Heart right ventricle (tissue), 16 donors: ENCODE measurements at regions of chr11 and their contacts with region 1.

Region 1: GRCh38 chr11:43944761-43945311 is 2.4 kb downstream of the C11orf96 start:
- DNase-seq: peak; percentile 81 to 85
- ATAC-seq: peak; percentile 18 to 71 (median 52)
- H3K4me3 ChIP-seq: peak overlapping the region; percentile 38 to 87 (median 80)
- H3K27ac ChIP-seq: peak overlapping the region; percentile 86 to 93 (median 92)
- H3K4me1 ChIP-seq: peaks cover 5 to 58% (median 32%) of the 10 kb centered on the region in 9 donors
- H3K27me3 ChIP-seq: peaks cover 0 to 49% (median 0%) of the 10 kb centered on the region in 7 donors
- CTCF ChIP-seq: peak; percentile 74 to 90 (median 84)

Region 2: GRCh38 chr11:43542750-43543712 is 401.8 kb before region 1 on chr11:
- intact Hi-C with region 1: no loop called
- DNase-seq: no peak
- ATAC-seq: no peak
- H3K4me3 ChIP-seq: no peak overlapping the region
- H3K27ac ChIP-seq: no peak overlapping the region
- H3K4me1 ChIP-seq: peaks cover 0 to 9% (median 3%) of the 10 kb centered on the region in 9 donors
- H3K27me3 ChIP-seq: peaks cover 0 to 57% (median 42%) of the 10 kb centered on the region in 7 donors
- CTCF ChIP-seq: no peak

Region 3: GRCh38 chr11:43895601-43896000 is 49.2 kb before region 1 on chr11:
- intact Hi-C with region 1: loop called in 4 of 10 experiments (anchors 5 kb)
- DNase-seq: no peak
- ATAC-seq: no peak
- H3K4me3 ChIP-seq: no peak overlapping the region
- H3K27ac ChIP-seq: no peak overlapping the region
- H3K4me1 ChIP-seq: no peaks in the 10 kb centered on the region
- H3K27me3 ChIP-seq: no peaks in the 10 kb centered on the region
- CTCF ChIP-seq: no peak

Region 4: DNA sequence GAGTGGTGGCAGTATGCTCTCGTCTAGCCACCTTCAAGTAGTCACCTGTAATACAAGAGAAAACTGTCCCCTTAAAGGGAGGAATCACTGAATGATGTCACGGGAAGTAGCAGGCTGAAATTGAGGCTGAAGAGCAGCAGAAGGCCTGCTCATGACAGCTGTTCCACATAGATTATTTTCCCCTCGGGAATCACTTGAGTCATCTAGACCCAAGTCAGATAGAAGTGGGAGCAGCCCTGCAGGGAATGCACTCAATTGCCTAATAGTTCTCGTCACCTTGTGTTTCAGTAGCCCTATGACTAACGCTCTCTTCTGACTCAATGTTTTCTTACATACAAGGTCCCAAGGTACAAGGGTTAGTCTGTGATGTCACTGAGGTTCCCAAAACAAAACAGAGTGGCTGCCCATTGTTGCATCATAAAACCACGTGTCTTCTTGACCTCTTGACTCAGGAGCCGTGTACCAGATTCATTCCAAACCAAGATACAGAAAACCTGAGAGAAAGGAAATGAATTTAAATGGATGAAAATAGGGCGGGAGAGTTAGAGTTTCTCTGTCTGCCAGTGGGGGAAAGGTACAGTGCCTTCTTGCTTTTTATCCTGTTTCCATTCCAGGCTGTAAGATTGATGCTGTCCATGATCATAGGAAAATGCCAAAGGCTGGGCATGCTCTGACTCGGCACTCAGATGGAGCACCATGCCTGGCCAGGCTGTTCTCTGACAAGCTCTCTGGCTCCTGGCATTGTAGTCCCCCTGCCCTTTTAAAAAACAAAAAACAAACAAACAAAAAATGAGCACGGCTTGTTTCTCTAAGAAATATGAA is 24.0 kb before region 1 on chr11:
- intact Hi-C with region 1: loop called in 2 of 10 experiments (anchors 2 kb)
- DNase-seq: peak in 1 of 2 donors; percentile 74
- ATAC-seq: peak; percentile 72 to 89 (median 84)
- H3K4me3 ChIP-seq: no peak overlapping the region
- H3K27ac ChIP-seq: peak overlapping the region; percentile 21 to 88 (median 74)
- H3K4me1 ChIP-seq: peaks cover 0 to 72% (median 35%) of the 10 kb centered on the region in 9 donors
- H3K27me3 ChIP-seq: no peaks in the 10 kb centered on the region
- CTCF ChIP-seq: no peak

Region 5: GRCh38 chr11:43992834-43993637 is 48.2 kb after region 1 on chr11:
- intact Hi-C with region 1: loop called in 6 of 10 experiments (anchors 5 to 10 kb)
- DNase-seq: peak in 1 of 2 donors; percentile 52
- ATAC-seq: peak; percentile 5 to 63 (median 44)
- H3K4me3 ChIP-seq: peak overlapping the region in 4 of 10 donors; percentile 19 to 33 (median 28)
- H3K27ac ChIP-seq: peak overlapping the region; percentile 64 to 85 (median 76)
- H3K4me1 ChIP-seq: peaks cover 23 to 48% (median 42%) of the 10 kb centered on the region in 9 donors
- H3K27me3 ChIP-seq: no peaks in the 10 kb centered on the region
- CTCF ChIP-seq: no peak

Region 6: GRCh38 chr11:44036811-44037657 is 92.2 kb after region 1 on chr11:
- intact Hi-C with region 1: loop called in 9 of 10 experiments (anchors 2 to 10 kb)
- DNase-seq: peak; percentile 80 to 86
- ATAC-seq: peak; percentile 88 to 95 (median 92)
- H3K4me3 ChIP-seq: no peak overlapping the region
- H3K27ac ChIP-seq: peak overlapping the region in 3 of 10 donors; percentile 9 to 31 (median 25)
- H3K4me1 ChIP-seq: peaks cover 0 to 31% (median 24%) of the 10 kb centered on the region in 9 donors
- H3K27me3 ChIP-seq: no peaks in the 10 kb centered on the region
- CTCF ChIP-seq: peak; percentile 79 to 94 (median 88)